Activated CD8-positive, alpha-beta T cell treated with anti-CD3 and anti-CD28 coated beads for 36 hours (primary cell): ENCODE measurements at regions of chr12 and their contacts with region 1.

Region 1: DNA sequence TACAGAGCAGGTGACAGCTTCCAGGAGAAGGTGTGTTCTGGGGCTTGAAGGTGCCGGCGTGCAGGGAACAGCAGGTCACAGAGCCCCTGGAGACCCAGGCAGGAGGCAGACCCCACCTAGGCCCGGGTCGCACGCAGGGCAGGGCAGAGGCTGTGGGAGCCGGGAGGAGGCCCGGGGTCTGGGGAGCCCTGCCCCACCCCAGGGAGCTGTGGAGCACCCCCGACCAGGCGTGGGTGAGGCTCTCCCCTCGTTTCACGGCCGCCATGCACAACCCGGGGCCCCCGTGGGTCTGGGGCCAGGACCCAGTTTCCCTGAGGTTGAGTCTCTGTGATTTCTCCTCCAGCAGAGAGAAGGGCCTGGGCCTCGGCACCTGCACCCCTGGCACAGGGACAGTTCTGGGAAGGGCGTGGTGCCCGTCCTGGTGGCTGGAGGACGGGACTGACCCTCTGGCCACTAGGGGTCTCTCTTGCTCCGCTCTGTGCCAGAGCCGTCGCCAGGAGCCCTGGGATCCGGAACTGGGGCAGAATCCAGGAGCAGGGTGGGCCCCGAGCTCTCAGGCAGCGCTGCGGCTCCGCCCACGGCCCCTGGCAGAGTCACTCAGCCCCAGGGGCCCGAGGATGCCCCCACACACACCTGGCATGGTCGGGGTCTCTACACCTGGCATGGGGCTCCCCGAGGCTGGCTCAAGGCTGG is 75.2 kb upstream of the FBRSL1 start:
- DNase-seq: peak; percentile 77
- ATAC-seq: peak; percentile 96
- H3K4me3 Mint-ChIP-seq: no peak overlapping the region
- H3K27ac Mint-ChIP-seq: no peak overlapping the region
- H3K4me1 Mint-ChIP-seq: no peaks in the 10 kb centered on the region
- H3K27me3 Mint-ChIP-seq: no peaks in the 10 kb centered on the region
- CTCF ChIP-seq: peak; percentile 92

Region 2: GRCh38 chr12:132243596-132244310 is 171.0 kb before region 1 on chr12:
- CTCF ChIA-PET with region 1: no interaction called
- POLR2A ChIA-PET with region 1: no interaction called
- intact Hi-C with region 1: no loop called
- DNase-seq: no peak
- ATAC-seq: no peak
- H3K4me3 Mint-ChIP-seq: no peak overlapping the region
- H3K27ac Mint-ChIP-seq: no peak overlapping the region
- H3K4me1 Mint-ChIP-seq: no peaks in the 10 kb centered on the region
- H3K27me3 Mint-ChIP-seq: no peaks in the 10 kb centered on the region
- CTCF ChIP-seq: no peak

Region 3: DNA sequence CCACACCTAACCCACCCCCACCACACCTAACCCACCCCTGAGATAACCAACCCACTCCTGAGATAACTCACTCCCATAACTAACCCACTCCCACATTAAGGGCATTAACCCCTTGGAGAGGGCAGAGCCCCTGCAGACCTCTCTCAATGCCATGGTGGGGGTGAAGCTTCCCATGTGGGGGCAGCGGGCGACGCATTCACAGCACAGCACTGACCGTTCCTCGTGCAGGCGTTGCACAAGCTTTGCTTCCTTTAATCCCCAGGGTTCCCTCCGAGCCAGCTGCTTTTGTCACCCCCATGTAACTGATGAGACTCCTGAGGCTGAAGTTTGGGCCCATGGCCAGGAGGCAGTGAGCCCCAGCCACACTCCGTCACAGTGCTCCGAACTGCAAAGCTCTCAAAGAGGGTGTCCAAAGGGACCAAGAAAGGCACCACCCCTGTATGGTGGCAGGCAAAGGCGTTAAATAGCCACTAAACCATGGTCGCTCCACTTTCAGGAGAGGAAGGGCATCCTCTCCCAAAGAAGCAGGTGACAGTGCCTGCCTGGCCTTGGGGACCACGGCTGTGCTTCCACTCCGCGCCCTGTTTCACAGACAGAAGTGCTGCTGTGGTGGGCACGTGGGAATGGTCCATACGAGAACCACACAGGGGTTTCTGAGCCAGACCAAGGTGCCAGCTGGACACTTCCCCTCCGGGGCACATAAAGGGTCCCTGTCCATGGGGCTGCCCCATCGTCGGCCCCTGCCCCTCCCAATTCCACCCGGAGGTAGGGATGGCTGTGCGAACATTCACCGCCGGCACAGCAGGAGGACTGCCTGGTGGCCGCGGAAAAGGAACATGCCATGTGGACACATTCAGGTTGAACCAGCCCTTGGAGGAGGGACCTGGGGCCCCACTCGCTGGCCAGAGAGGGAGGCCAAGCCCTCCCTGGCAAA is 113.7 kb before region 1 on chr12:
- CTCF ChIA-PET with region 1: no interaction called
- POLR2A ChIA-PET with region 1: no interaction called
- intact Hi-C with region 1: no loop called
- DNase-seq: no peak
- ATAC-seq: no peak
- H3K4me3 Mint-ChIP-seq: no peak overlapping the region
- H3K27ac Mint-ChIP-seq: no peak overlapping the region
- H3K4me1 Mint-ChIP-seq: no peaks in the 10 kb centered on the region
- H3K27me3 Mint-ChIP-seq: peaks cover 4% of the 10 kb centered on the region
- CTCF ChIP-seq: no peak

Region 4: GRCh38 chr12:132523576-132524331 is 109.0 kb after region 1 on chr12:
- CTCF ChIA-PET with region 1: interaction called, 69 read pairs
- POLR2A ChIA-PET with region 1: no interaction called
- intact Hi-C with region 1: loop called (anchors 5 kb)
- DNase-seq: peak; percentile 86
- ATAC-seq: peak; percentile 86
- H3K4me3 Mint-ChIP-seq: no peak overlapping the region
- H3K27ac Mint-ChIP-seq: no peak overlapping the region
- H3K4me1 Mint-ChIP-seq: peaks cover 6% of the 10 kb centered on the region
- H3K27me3 Mint-ChIP-seq: no peaks in the 10 kb centered on the region
- CTCF ChIP-seq: peak; percentile 92

Region 5: GRCh38 chr12:132560614-132561426 is 146.0 kb after region 1 on chr12:
- CTCF ChIA-PET with region 1: interaction called, 15 read pairs
- POLR2A ChIA-PET with region 1: no interaction called
- intact Hi-C with region 1: loop called (anchors 10 kb)
- DNase-seq: peak; percentile 86
- ATAC-seq: peak; percentile 72
- H3K4me3 Mint-ChIP-seq: peak overlapping the region; percentile 76
- H3K27ac Mint-ChIP-seq: no peak overlapping the region
- H3K4me1 Mint-ChIP-seq: peaks cover 21% of the 10 kb centered on the region
- H3K27me3 Mint-ChIP-seq: peaks cover 14% of the 10 kb centered on the region
- CTCF ChIP-seq: peak; percentile 94

Region 6: GRCh38 chr12:132614861-132615578 is 200.2 kb after region 1 on chr12:
- CTCF ChIA-PET with region 1: interaction called, 18 read pairs
- POLR2A ChIA-PET with region 1: interaction called, 3 read pairs
- intact Hi-C with region 1: no loop called
- DNase-seq: peak; percentile 86
- ATAC-seq: peak; percentile 93
- H3K4me3 Mint-ChIP-seq: no peak overlapping the region
- H3K27ac Mint-ChIP-seq: no peak overlapping the region
- H3K4me1 Mint-ChIP-seq: peaks cover 7% of the 10 kb centered on the region
- H3K27me3 Mint-ChIP-seq: peaks cover 45% of the 10 kb centered on the region
- CTCF ChIP-seq: peak; percentile 95